AG04450 (cell line): ENCODE measurements at regions of chr7 and their contacts with region 1.

Region 1: DNA sequence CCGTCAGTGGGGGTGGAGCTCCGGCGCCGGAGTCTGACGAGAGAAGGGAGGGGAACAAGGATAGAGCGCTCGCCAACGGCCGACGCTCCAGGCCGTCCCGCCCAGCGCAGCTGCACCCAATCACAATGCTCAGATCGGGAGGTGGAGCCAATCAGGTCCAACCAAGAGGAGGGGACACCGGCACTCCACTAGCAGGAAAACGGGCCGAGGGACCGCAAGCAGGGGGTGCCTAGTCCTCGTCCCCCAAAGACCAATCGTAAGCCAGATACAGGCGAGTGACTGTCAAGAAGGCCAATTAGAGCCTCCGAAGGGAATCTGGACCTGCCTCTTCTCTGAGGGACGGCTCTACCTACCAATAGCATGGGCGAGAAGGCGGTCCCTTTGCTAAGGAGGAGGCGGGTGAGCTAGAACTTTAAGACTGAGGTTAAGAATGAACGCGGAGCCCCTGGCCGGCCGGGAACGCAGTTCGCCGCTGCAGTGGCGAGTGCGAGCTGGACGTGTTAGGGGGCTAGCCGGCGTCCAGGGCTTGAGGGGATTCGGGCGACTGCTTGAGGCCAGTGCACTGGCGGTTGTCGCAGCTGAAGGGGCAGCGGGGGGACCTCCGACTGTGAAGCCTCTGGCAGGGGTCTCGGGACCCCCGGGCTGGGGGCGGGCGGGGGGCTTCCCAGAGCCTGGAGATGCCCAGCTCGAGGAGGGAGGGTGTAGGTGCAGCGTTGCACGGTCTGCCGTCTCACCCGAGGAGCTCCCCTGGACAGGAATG is at the start of gene FBXO24:
- DNase-seq: peak; percentile 100
- H3K4me3 ChIP-seq: peak within 1 kb of the TSS; percentile 99
- H3K27ac ChIP-seq: peak within 1 kb of the TSS; percentile 87
- H3K27me3 ChIP-seq: no peaks in the 10 kb centered on the region
- CTCF ChIP-seq: no peak
- polyA plus RNA-seq, gene FBXO24: 0.29 and 0.33 TPM in 2 replicates

Region 2: GRCh38 chr7:100469227-100470044 is 117.0 kb before region 1 on chr7:
- CTCF ChIA-PET with region 1: interaction called, 15 read pairs
- POLR2A ChIA-PET with region 1: interaction called, 5 read pairs
- DNase-seq: no peak
- H3K4me3 ChIP-seq: no peak overlapping the region
- H3K27ac ChIP-seq: no peak overlapping the region
- H3K27me3 ChIP-seq: no peaks in the 10 kb centered on the region
- CTCF ChIP-seq: peak; percentile 90

Region 3: DNA sequence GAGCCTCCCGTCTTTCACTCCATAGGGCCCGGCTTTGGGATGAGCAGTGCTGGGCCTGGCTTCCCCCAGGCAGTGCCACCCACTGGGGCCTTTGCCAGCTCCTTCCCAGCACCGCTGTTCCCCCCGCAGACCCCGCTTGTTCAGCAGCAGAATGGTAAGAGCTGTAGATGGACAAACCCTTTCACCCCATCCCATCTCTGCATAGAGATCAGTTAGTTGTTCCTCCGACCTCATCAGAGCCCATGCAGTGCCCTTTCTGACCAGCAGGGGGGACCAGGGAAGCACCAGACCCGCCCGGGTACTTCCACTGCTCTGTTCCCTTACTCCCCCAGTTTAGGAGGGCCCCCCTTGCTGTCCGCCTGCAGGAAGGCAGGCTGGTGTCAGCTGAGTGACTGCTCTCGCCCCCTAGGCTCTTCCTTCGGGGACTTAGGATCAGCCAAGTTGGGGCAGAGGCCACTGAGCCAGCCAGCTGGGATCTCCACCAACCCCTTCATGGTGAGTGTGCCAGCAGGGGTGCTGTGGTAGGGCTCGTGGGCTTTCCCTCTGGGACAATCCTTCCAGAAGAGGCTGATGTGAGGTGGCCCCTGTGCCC is 22.5 kb before region 1 on chr7:
- CTCF ChIA-PET with region 1: interaction called, 25 read pairs
- POLR2A ChIA-PET with region 1: interaction called, 4 read pairs
- DNase-seq: no peak
- H3K4me3 ChIP-seq: no peak overlapping the region
- H3K27ac ChIP-seq: no peak overlapping the region
- H3K27me3 ChIP-seq: no peaks in the 10 kb centered on the region
- CTCF ChIP-seq: peak; percentile 97

Region 4: DNA sequence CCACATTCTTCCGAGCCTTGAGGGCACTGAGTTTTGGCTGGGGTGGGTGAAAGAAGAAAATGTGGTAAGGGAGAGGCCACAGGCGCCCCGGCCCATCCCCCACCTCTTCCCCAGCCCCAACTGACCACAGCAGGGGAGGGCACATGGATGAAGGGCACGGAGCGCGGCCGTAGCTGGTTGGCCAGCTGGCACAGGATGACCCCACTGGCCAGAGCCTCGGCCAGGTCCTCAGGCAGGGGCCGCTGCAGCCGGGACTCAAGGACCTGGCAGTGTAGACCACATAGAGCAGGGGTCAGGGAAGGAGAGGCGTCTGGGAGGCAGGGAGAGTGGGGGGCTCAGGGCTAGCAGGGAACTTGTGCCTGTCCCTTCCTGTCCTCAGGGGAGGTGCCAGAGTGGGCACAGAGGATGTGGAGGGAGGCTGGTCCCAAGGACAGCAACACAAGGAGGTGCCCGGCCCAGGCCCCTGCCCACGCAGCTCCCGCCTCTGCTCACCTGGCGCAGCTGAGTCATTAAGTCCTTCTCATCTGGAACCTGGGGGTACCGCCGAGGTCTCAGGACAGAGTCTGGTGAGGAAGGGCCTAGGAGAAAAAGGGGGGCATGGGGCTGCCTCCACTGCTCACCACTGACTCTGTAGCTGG is 10.6 kb before region 1 on chr7:
- CTCF ChIA-PET with region 1: no interaction called
- POLR2A ChIA-PET with region 1: interaction called, 20 read pairs
- DNase-seq: no peak
- H3K4me3 ChIP-seq: no peak overlapping the region
- H3K27ac ChIP-seq: no peak overlapping the region
- H3K27me3 ChIP-seq: no peaks in the 10 kb centered on the region
- CTCF ChIP-seq: no peak

Region 5: DNA sequence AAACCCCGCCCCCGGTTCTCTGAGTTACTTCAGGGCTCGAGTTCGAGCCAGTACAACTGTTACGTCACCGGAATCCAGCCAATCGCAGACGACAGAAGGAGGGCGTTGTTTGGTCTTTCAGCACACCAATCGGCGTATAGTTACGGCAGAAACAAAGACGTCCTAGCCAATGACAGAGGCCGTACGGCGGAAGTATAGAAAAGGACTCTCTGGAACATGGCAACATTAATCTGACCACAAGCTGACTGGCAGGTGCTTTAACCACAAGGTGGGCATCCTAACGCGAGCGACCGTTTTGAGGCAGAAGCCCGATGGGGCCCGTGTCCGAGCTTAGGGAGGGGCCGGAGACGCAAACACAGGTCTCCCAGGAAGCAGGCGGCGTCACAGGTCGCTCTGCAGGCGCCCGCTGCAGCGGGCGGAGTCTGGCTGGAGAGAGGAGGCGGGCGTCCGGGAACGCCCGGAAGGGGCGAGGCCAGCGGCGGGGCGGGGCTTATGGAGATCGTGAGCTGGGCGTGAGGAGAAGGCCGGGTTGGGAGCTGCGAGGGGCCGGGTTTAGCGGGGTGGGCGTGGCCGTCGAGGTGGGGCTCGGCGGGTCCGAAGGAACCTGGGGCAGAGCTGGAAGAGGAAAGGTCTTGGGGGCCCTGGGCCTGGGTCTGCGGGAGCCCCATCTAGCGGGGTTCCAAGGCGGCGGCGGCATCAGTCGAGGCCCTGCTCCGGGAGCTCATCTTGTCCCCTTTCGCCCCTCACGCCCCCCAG is 25.7 kb after region 1 on chr7 and contains the start of gene MOSPD3:
- CTCF ChIA-PET with region 1: interaction called, 4 read pairs
- POLR2A ChIA-PET with region 1: interaction called, 30 read pairs
- DNase-seq: peak; percentile 99
- H3K4me3 ChIP-seq: peak within 1 kb of the TSS; percentile 90
- H3K27ac ChIP-seq: peak within 1 kb of the TSS; percentile 82
- H3K27me3 ChIP-seq: no peaks in the 10 kb centered on the region
- CTCF ChIP-seq: no peak
- polyA plus RNA-seq, gene MOSPD3: 9.1 and 10.0 TPM in 2 replicates

Region 6: DNA sequence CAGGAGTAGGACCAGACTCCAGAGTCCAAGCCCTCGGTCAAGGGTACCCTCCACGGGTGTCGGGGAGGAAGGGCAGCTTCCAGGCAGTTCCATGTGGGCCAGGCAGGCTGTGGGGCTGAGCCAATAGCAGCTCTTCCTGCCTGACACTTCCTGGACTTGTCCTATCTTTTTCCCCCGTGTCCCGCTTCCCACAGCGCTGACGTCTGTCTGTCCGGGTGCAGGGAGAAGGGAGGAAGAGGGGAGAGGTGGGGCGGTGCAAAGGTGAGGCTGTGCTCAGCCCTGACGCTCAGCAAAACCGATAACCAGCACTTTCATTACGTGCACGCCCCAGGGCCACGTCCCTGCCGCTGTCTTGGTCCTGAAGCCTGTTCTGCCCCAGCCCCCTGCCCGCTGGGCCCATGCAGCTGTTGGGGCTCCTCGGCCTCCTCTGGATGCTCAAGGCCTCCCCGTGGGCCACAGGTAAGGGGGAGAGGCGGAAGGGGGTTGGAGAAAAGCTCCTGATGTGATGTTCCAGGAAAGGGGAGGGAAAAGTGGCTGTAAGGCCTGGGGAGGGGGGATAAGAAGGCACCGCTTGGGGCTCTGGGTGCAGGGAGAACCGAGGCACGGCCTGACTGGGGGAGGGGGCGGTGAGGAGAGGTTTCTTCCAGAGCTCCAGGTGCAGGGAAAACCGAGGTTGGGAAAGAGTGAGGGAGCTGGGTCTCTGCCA is 362.9 kb after region 1 on chr7 and contains the start of gene MUC3A:
- CTCF ChIA-PET with region 1: no interaction called
- POLR2A ChIA-PET with region 1: no interaction called
- DNase-seq: no peak
- H3K4me3 ChIP-seq: no peak within 1 kb of the TSS
- H3K27ac ChIP-seq: no peak within 1 kb of the TSS
- H3K27me3 ChIP-seq: peaks cover 35% of the 10 kb centered on the region
- CTCF ChIP-seq: no peak
- polyA plus RNA-seq, gene MUC3A: not detected in 2 replicates

Region 7: GRCh38 chr7:101567230-101567629 is 980.8 kb after region 1 on chr7:
- CTCF ChIA-PET with region 1: no interaction called
- POLR2A ChIA-PET with region 1: no interaction called
- DNase-seq: no peak
- H3K4me3 ChIP-seq: no peak overlapping the region
- H3K27ac ChIP-seq: no peak overlapping the region
- H3K27me3 ChIP-seq: peaks cover 15% of the 10 kb centered on the region
- CTCF ChIP-seq: no peak